AG04450 (cell line): ENCODE measurements at regions of chr12 and their contacts with region 1.

Region 1: GRCh38 chr12:65106948-65107347 is 14.2 kb downstream of the WIF1 start:
- DNase-seq: no peak
- H3K4me3 ChIP-seq: no peak overlapping the region
- H3K27ac ChIP-seq: no peak overlapping the region
- H3K27me3 ChIP-seq: peaks cover 3% of the 10 kb centered on the region
- CTCF ChIP-seq: peak; percentile 53

Region 2: DNA sequence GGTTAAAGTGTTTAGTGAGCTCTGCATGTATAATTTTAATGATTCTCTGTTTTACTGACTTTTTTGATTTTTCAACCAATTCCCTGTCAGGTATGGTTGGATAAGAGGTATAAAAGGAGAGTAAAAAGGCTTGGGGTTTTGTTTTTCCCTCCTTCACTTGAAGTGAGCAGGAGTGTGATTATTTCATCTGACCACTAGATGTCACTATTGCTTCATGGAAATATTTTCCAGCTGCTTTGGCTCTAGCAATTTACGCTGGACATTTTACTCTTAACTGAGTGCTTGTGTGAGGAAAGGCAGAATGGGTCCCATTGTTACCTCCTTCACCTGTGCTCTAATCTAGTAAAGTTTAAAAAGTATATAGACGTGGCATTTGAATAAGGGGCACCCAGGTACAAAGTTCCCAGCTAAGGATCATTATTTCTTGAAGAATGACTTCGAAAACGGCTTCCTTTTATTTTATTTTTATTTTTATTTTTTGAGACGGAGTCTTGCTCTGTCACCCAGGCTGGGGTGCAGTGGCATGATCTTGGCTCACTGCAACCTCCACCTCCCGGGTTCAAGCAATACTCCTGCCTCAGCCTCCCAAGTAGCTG is 216.0 kb before region 1 on chr12:
- CTCF ChIA-PET with region 1: interaction called, 107 read pairs
- POLR2A ChIA-PET with region 1: no interaction called
- DNase-seq: no peak
- H3K4me3 ChIP-seq: no peak overlapping the region
- H3K27ac ChIP-seq: no peak overlapping the region
- H3K27me3 ChIP-seq: peaks cover 11% of the 10 kb centered on the region
- CTCF ChIP-seq: peak; percentile 70